MCF 10A (cell line): ENCODE measurements at regions of chr13 and their contacts with region 1.

Region 1: GRCh38 chr13:48412881-48413351 is at the start of gene LPAR6:
- DNase-seq: peak; percentile 64
- H3K4me3 Mint-ChIP-seq: peak within 1 kb of the TSS; percentile 96
- H3K27ac Mint-ChIP-seq: peak within 1 kb of the TSS; percentile 97
- H3K4me1 Mint-ChIP-seq: peaks cover 20% of the 10 kb centered on the region
- H3K27me3 Mint-ChIP-seq: no peaks in the 10 kb centered on the region
- CTCF ChIP-seq: no peak
- total RNA-seq, gene LPAR6: 2.2 and 3.1 TPM in 2 replicates

Region 2: GRCh38 chr13:48181482-48182145 is 231.3 kb before region 1 on chr13:
- CTCF ChIA-PET with region 1: no interaction called
- POLR2A ChIA-PET with region 1: no interaction called
- intact Hi-C with region 1: no loop called
- DNase-seq: no peak
- H3K4me3 Mint-ChIP-seq: no peak overlapping the region
- H3K27ac Mint-ChIP-seq: no peak overlapping the region
- H3K4me1 Mint-ChIP-seq: no peaks in the 10 kb centered on the region
- H3K27me3 Mint-ChIP-seq: no peaks in the 10 kb centered on the region
- CTCF ChIP-seq: no peak

Region 3: DNA sequence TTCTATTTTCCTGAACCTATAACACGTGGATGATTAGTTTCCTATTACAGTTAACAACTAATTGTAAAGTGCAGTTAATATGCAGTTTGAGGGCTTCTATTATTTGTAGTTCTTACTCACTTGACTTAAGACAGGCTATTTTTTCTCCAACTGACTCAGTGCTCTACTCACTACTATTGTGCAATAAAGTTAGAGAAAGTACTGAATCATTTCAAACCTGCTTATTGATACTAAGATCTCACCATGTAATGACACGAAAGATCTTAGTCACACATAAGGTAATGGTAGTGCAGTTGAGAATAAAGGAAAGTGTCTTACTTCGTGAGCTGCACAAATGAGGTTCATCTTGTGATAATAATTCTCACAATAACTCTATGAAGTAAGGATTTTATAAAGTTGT is 202.7 kb before region 1 on chr13:
- CTCF ChIA-PET with region 1: no interaction called
- POLR2A ChIA-PET with region 1: no interaction called
- intact Hi-C with region 1: no loop called
- DNase-seq: peak; percentile 90
- H3K4me3 Mint-ChIP-seq: peak overlapping the region; percentile 54
- H3K27ac Mint-ChIP-seq: peak overlapping the region; percentile 53
- H3K4me1 Mint-ChIP-seq: peaks cover 9% of the 10 kb centered on the region
- H3K27me3 Mint-ChIP-seq: no peaks in the 10 kb centered on the region
- CTCF ChIP-seq: no peak

Region 4: DNA sequence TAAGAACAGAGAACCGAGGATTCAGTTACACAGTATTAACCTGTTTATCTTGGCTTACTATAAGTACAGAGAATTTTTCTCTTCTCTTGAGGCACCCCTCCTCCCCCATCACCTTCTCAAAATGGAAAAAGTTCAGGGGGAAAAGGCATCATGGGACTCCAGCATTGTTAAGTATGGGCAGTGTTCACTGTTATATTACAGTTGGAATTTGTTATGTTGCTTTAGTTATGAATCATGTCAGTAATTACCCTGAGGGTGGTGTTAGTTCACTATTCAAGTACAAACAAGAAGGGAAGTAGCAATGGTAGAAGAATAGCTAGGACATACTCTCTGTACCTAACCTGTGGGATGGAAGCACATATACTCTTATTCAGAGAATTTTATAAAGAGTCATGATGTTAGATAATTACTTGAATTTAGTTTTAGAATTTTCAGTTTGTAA is 12.0 kb before region 1 on chr13:
- CTCF ChIA-PET with region 1: interaction called, 4 read pairs
- POLR2A ChIA-PET with region 1: interaction called, 42 read pairs
- intact Hi-C with region 1: no loop called
- DNase-seq: peak; percentile 90
- H3K4me3 Mint-ChIP-seq: peak overlapping the region; percentile 50
- H3K27ac Mint-ChIP-seq: peak overlapping the region; percentile 94
- H3K4me1 Mint-ChIP-seq: peaks cover 42% of the 10 kb centered on the region
- H3K27me3 Mint-ChIP-seq: no peaks in the 10 kb centered on the region
- CTCF ChIP-seq: peak; percentile 8

Region 5: GRCh38 chr13:48437371-48437770 is 24.5 kb after region 1 on chr13:
- CTCF ChIA-PET with region 1: no interaction called
- POLR2A ChIA-PET with region 1: interaction called, 14 read pairs
- intact Hi-C with region 1: no loop called
- DNase-seq: peak; percentile 44
- H3K4me3 Mint-ChIP-seq: no peak overlapping the region
- H3K27ac Mint-ChIP-seq: peak overlapping the region; percentile 86
- H3K4me1 Mint-ChIP-seq: peaks cover 13% of the 10 kb centered on the region
- H3K27me3 Mint-ChIP-seq: no peaks in the 10 kb centered on the region
- CTCF ChIP-seq: no peak